ENCODE measurements at regions of chr14 and their contacts with region 1.

Region 1: GRCh38 chr14:93788543-93789227 is 400 bp upstream of the PRIMA1 start:
- DNase-seq: peak; percentile 40
- H3K4me3 ChIP-seq: peak overlapping the region; percentile 51
- H3K27ac ChIP-seq: peak overlapping the region; percentile 69 to 79
- H3K4me1 ChIP-seq: no peaks in the 10 kb centered on the region
- H3K27me3 ChIP-seq: no peaks in the 10 kb centered on the region
- CTCF ChIP-seq: peak in 2 of 4 experiments; percentile 26 to 29
- POLR2A ChIP-seq: peak; percentile 55

Region 2: GRCh38 chr14:93206793-93207467 is 581.8 kb before region 1 on chr14 and contains the starts of genes GON7 and UBR7:
- intact Hi-C with region 1: no loop called
- DNase-seq: peak; percentile 96
- H3K4me3 ChIP-seq: peak within 1 kb of the TSS; percentile 69 to 70
- H3K27ac ChIP-seq: peak within 1 kb of the TSS; percentile 69 to 75
- H3K4me1 ChIP-seq: no peaks in the 10 kb centered on the region
- H3K27me3 ChIP-seq: no peaks in the 10 kb centered on the region
- CTCF ChIP-seq: peak in 3 of 4 experiments; percentile 25 to 51 (median 48)
- POLR2A ChIP-seq: peak; percentile 56
- total RNA-seq, gene GON7: 8.7 to 17.4 TPM
- total RNA-seq, gene UBR7: 22.4 to 26.2 TPM

Region 3: DNA sequence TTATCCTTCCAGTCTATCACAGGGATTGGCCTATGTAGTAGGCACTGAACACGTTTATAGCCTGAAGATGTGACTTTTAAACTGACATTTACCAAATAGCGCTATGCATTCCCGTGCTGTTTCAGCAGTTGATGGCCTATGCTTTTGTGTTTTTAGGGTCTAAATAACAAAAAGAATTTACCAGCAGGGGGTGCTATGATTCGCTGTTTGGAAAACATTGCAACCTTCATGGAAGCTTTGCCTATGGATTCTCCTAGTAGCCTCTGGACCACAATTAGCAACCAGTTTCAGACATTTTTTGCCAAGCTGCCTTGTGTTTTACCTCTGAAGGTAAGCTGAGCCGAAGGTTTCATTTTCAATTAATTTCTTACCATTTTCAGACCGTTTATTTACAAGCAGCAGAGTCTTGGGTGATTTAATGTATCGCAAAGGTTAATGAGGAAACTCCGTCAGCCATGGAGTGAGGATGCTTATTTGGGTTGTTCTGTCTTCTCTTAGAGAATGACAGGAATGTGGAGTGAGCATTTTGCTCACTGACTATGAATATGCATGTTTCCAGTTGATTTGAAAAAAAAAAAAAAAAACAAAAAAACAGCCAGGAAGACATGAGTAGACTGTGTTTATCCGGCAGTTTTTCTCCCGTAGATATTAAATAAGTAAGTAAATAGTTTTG is 133.5 kb before region 1 on chr14:
- intact Hi-C with region 1: loop called (anchors 2 kb)
- DNase-seq: peak; percentile 50
- H3K4me3 ChIP-seq: no peak overlapping the region
- H3K27ac ChIP-seq: no peak overlapping the region
- H3K4me1 ChIP-seq: no peaks in the 10 kb centered on the region
- H3K27me3 ChIP-seq: no peaks in the 10 kb centered on the region
- CTCF ChIP-seq: peak; percentile 46 to 75 (median 66)
- POLR2A ChIP-seq: no peak

Region 4: GRCh38 chr14:93669632-93670031 is 119.1 kb before region 1 on chr14:
- intact Hi-C with region 1: no loop called
- DNase-seq: no peak
- H3K4me3 ChIP-seq: no peak overlapping the region
- H3K27ac ChIP-seq: no peak overlapping the region
- H3K4me1 ChIP-seq: no peaks in the 10 kb centered on the region
- H3K27me3 ChIP-seq: no peaks in the 10 kb centered on the region
- CTCF ChIP-seq: no peak
- POLR2A ChIP-seq: no peak

Region 5: DNA sequence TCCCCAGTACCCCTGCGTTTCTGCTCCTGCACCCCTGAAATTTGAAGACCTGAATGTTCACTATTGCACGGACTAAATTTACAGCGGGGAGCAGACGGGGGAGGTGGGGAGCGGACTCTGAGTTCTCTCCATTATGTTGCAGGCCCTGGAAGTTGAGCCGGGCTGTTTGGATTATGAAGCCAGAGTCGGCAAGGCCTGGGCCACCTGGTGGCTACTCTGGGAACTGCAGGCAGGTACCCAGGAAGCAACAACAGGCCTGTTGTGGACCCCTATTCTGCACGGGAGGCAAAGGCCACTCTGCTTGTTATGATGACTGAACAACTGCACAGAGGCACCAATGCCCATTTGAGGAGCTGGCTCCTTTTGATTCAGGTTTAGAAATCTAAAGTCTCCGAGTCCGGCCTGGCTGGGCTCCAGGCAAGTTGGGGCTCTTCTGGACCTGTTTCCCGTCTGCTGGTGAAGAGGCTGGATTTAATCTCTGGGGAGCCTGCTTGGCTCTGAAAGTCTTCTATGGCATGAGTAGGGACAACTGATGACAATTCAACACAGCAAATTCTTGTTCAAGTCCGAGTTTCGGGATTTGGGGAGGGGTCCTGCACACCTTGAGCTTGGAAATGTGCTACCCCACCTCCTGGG is 104.4 kb after region 1 on chr14:
- intact Hi-C with region 1: loop called (anchors 5 kb)
- DNase-seq: peak; percentile 62
- H3K4me3 ChIP-seq: no peak overlapping the region
- H3K27ac ChIP-seq: no peak overlapping the region
- H3K4me1 ChIP-seq: no peaks in the 10 kb centered on the region
- H3K27me3 ChIP-seq: peaks cover 3% of the 10 kb centered on the region
- CTCF ChIP-seq: peak; percentile 93 to 96 (median 94)
- POLR2A ChIP-seq: no peak

Region 6: DNA sequence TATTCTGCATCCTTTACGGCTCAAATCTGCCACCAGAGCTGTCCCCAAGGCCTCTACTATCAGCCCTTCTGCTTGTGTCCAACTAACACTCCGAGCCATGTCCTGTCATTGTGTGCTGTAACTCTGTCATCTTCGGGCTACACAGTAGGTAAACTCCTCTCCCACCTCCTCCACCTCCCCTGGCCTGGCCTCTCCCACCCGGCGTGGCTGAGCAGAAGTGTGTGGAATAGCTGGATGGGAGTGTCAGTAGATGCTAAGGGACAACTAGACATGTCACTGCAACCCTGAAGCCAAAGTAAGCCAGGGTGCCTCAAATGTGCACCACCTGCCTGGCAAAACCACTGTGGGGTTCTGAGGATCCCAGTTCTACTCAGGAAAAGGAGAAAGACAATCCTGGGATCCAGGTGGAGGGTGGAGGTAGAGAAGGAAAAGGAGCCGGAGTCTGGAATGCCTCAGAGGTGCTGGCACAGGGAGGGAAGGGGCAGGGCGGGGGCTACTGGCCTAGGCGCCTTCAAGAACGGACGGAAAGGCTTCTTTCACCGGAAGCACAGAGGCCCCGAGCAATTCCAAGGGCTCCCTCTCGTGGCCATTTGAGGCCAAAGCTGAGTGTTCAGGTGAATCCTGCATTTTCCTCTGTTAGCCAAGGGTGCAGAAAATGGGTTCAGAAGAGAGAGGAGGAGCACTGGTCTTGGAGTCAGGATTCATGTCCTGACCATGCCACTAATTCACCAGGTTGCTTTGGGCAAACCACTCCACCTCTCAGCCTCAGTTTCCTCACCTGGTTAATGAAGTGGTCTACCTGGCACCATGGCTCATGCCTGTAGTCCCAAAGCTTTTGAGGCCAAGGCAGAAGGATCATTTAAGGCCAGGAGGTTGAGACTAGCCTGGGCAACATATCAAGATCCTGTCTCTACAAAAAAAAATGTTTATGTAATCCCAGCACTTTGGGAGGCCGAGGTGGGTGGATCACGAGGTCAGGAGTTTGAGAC is 118.0 kb after region 1 on chr14:
- intact Hi-C with region 1: loop called (anchors 5 kb)
- DNase-seq: peak; percentile 61
- H3K4me3 ChIP-seq: no peak overlapping the region
- H3K27ac ChIP-seq: no peak overlapping the region
- H3K4me1 ChIP-seq: no peaks in the 10 kb centered on the region
- H3K27me3 ChIP-seq: no peaks in the 10 kb centered on the region
- CTCF ChIP-seq: peak in 3 of 4 experiments; percentile 65 to 67 (median 66)
- POLR2A ChIP-seq: no peak

Region 7: GRCh38 chr14:94001501-94002396 is 213.1 kb after region 1 on chr14:
- intact Hi-C with region 1: loop called (anchors 10 kb)
- DNase-seq: peak; percentile 47
- H3K4me3 ChIP-seq: no peak overlapping the region
- H3K27ac ChIP-seq: no peak overlapping the region
- H3K4me1 ChIP-seq: no peaks in the 10 kb centered on the region
- H3K27me3 ChIP-seq: no peaks in the 10 kb centered on the region
- CTCF ChIP-seq: peak; percentile 88 to 93 (median 89)
- POLR2A ChIP-seq: no peak

Measured in prostate gland (tissue), 2 donors.